Activated CD4-positive, alpha-beta T cell treated with anti-CD3 and anti-CD28 coated beads for 36 hours (primary cell): ENCODE measurements at regions of chr2 and their contacts with region 1.

Region 1: GRCh38 chr2:98444436-98445176 is at the start of gene INPP4A:
- DNase-seq: peak; percentile 87
- ATAC-seq: peak; percentile 74
- H3K4me3 Mint-ChIP-seq: peak within 1 kb of the TSS; percentile 83
- H3K27ac Mint-ChIP-seq: peak within 1 kb of the TSS; percentile 94
- H3K4me1 Mint-ChIP-seq: peaks cover 42% of the 10 kb centered on the region
- H3K27me3 Mint-ChIP-seq: no peaks in the 10 kb centered on the region
- total RNA-seq, gene INPP4A: 29.1 to 33.0 TPM

Region 2: GRCh38 chr2:98479959-98480524 is 35.4 kb after region 1 on chr2:
- CTCF ChIA-PET with region 1: interaction called, 4 read pairs
- POLR2A ChIA-PET with region 1: no interaction called
- intact Hi-C with region 1: loop called (anchors 2 to 5 kb)
- DNase-seq: peak; percentile 78
- ATAC-seq: peak; percentile 77
- H3K4me3 Mint-ChIP-seq: peak overlapping the region; percentile 6
- H3K27ac Mint-ChIP-seq: peak overlapping the region; percentile 85
- H3K4me1 Mint-ChIP-seq: peaks cover 98% of the 10 kb centered on the region
- H3K27me3 Mint-ChIP-seq: no peaks in the 10 kb centered on the region

Region 3: DNA sequence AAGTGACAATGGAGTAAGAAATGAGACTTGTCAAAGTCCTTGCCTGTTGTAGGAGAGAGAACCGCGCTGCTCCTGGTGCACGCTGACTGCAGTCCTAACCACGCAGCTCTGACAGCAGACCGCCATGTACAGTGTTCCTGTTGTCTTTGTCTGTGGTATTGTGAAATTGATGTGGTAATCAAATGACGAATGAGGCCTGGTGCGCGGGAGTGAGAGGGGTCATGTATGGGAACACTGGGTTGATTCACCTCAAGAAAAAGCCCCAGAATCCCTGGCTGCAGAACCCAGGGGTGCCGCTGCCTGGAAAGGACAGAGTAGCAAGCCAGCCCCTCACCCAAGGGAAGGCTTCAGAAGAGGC is 64.1 kb after region 1 on chr2:
- CTCF ChIA-PET with region 1: interaction called, 5 read pairs
- POLR2A ChIA-PET with region 1: no interaction called
- intact Hi-C with region 1: loop called in 1 of 2 experiments (anchors 5 kb)
- DNase-seq: peak; percentile 73
- ATAC-seq: peak; percentile 72
- H3K4me3 Mint-ChIP-seq: no peak overlapping the region
- H3K27ac Mint-ChIP-seq: peak overlapping the region; percentile 84
- H3K4me1 Mint-ChIP-seq: peaks cover 96% of the 10 kb centered on the region
- H3K27me3 Mint-ChIP-seq: no peaks in the 10 kb centered on the region

Region 4: GRCh38 chr2:98518090-98518489 is 73.5 kb after region 1 on chr2:
- CTCF ChIA-PET with region 1: interaction called, 6 read pairs
- POLR2A ChIA-PET with region 1: no interaction called
- intact Hi-C with region 1: loop called in 1 of 2 experiments (anchors 5 kb)
- DNase-seq: peak; percentile 72
- ATAC-seq: peak; percentile 75
- H3K4me3 Mint-ChIP-seq: no peak overlapping the region
- H3K27ac Mint-ChIP-seq: no peak overlapping the region
- H3K4me1 Mint-ChIP-seq: peaks cover 55% of the 10 kb centered on the region
- H3K27me3 Mint-ChIP-seq: no peaks in the 10 kb centered on the region

Region 5: GRCh38 chr2:98608116-98608999 is 163.8 kb after region 1 on chr2 and contains the starts of genes COA5 and UNC50:
- CTCF ChIA-PET with region 1: interaction called, 3 read pairs
- POLR2A ChIA-PET with region 1: no interaction called
- intact Hi-C with region 1: loop called in 1 of 2 experiments (anchors 10 kb)
- DNase-seq: peak; percentile 95
- ATAC-seq: peak; percentile 91
- H3K4me3 Mint-ChIP-seq: peak within 1 kb of the TSS; percentile 83
- H3K27ac Mint-ChIP-seq: peak within 1 kb of the TSS; percentile 94
- H3K4me1 Mint-ChIP-seq: peaks cover 61% of the 10 kb centered on the region
- H3K27me3 Mint-ChIP-seq: no peaks in the 10 kb centered on the region
- total RNA-seq, gene COA5: 17.7 to 33.2 TPM
- total RNA-seq, gene UNC50: 21.1 to 31.4 TPM

Region 6: GRCh38 chr2:98720286-98720685 is 275.7 kb after region 1 on chr2:
- CTCF ChIA-PET with region 1: no interaction called
- POLR2A ChIA-PET with region 1: no interaction called
- intact Hi-C with region 1: no loop called
- DNase-seq: no peak
- ATAC-seq: no peak
- H3K4me3 Mint-ChIP-seq: no peak overlapping the region
- H3K27ac Mint-ChIP-seq: peak overlapping the region; percentile 28
- H3K4me1 Mint-ChIP-seq: peaks cover 81% of the 10 kb centered on the region
- H3K27me3 Mint-ChIP-seq: no peaks in the 10 kb centered on the region